ENCODE measurements at regions of chr12 and their contacts with region 1.

Region 1: DNA sequence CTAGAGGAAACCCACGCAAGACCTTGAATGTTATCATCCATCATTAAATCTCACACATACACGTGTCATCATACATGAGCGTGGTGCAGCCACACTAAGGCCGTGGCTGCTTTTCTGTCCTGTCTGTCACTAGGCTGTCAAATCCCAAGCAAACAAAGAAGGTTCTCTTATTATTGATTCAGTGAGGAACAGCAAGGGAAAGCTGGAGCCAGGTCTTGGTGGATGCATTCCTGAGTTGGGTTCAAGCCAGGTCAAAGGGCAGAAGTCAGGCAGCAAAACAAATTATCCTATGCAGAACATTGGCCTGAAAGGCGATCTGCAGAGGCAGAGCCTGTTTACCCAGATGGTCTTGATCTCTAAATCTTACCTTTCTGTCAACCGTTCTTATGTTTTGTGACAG is 252.3 kb downstream of the NEDD1 start:
- DNase-seq: no peak

Region 2: DNA sequence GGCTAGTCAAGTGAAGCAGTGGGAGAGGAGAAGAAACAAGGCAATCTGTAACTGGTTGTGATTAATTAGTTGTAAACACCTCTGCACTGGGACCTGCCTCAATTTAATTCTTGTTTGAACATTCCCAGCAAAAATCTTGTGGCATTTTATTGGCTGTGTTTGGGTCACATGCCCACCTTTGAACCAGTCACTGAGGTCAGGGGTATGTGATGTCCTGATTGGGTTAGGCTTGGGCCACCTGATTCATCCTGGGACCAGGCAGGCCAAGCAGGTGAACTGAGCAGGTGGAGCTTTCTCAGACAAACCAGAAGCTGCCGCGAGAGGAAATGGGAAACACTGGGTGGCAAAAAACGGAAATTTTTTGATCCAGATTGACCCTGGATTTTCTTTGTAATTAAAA is 179.8 kb before region 1 on chr12:
- intact Hi-C with region 1: no loop called
- DNase-seq: no peak

Region 3: GRCh38 chr12:97216848-97217247 is 57.5 kb after region 1 on chr12:
- intact Hi-C with region 1: no loop called
- DNase-seq: no peak

Region 4: GRCh38 chr12:97312570-97313135 is 153.3 kb after region 1 on chr12:
- intact Hi-C with region 1: loop called (anchors 10 kb)
- DNase-seq: no peak

Measured in head of caudate nucleus (tissue), 42 donors.